ENCODE measurements at regions of chr20 and their contacts with region 1.

Region 1: GRCh38 chr20:44866703-44867335 is 18.7 kb upstream of the YWHAB start:
- DNase-seq: no peak
- ATAC-seq: no peak
- H3K4me3 ChIP-seq: no peak overlapping the region
- H3K27ac ChIP-seq: no peak overlapping the region
- H3K4me1 ChIP-seq: peaks cover 3% of the 10 kb centered on the region; the same call in 1 of the 2 replicates
- H3K27me3 ChIP-seq: 0 out of 2 replicates have a peak, but pooled peaks cover 6% of the 10 kb centered on the region
- CTCF ChIP-seq: no peak

Region 2: GRCh38 chr20:44664131-44664530 is 202.7 kb before region 1 on chr20:
- CTCF ChIA-PET with region 1: interaction called, 12 read pairs
- POLR2A ChIA-PET with region 1: no interaction called
- intact Hi-C with region 1: no loop called
- DNase-seq: no peak
- ATAC-seq: no peak
- H3K4me3 ChIP-seq: no peak overlapping the region
- H3K27ac ChIP-seq: no peak overlapping the region
- H3K4me1 ChIP-seq: no peaks in the 10 kb centered on the region
- H3K27me3 ChIP-seq: 0 out of 2 replicates have a peak, but pooled peaks cover 9% of the 10 kb centered on the region
- CTCF ChIP-seq: no peak

Region 3: DNA sequence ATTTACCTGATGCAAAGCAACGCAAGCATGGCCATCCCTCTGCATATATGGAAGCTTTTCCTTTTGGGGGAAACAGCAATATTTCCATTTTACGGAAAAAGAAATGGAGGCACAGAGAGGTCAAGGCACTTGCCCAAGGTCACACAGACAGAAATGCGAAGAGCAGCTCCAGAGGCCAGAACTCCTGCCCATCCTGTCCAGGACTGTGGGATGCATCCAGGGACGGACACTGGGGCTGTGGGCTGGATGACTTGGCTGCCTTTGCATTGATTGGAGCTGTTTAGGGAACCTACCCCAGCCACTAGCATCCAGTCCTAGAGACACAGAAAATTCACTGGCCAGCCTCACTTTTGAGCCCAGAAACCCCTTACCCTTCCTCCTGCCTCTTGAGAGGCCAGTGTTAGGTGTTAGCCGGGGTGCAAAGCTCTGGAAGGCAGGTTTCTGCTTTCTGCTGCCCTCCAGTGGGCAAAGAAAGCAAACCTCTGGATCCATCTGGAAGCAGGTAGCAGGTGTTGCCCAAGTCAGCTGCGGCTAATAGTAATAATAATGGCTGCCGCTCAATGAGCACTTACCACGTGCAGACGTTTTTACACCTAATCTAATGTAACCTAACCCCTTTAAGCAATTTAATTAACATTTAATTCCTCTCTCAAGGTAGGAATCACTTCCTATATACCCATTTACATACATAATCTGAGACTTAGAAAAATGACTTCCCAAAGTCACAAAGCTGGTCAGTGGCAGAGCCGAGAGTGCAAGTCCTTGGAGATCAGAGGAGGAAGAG is 183.4 kb before region 1 on chr20:
- CTCF ChIA-PET with region 1: interaction called, 3 read pairs
- POLR2A ChIA-PET with region 1: no interaction called
- intact Hi-C with region 1: loop called (anchors 2 kb)
- DNase-seq: peak; percentile 87
- ATAC-seq: peak; percentile 85
- H3K4me3 ChIP-seq: no peak overlapping the region
- H3K27ac ChIP-seq: no peak overlapping the region
- H3K4me1 ChIP-seq: peaks cover 10% of the 10 kb centered on the region
- H3K27me3 ChIP-seq: no peaks in the 10 kb centered on the region
- CTCF ChIP-seq: peak; percentile 89

Region 4: DNA sequence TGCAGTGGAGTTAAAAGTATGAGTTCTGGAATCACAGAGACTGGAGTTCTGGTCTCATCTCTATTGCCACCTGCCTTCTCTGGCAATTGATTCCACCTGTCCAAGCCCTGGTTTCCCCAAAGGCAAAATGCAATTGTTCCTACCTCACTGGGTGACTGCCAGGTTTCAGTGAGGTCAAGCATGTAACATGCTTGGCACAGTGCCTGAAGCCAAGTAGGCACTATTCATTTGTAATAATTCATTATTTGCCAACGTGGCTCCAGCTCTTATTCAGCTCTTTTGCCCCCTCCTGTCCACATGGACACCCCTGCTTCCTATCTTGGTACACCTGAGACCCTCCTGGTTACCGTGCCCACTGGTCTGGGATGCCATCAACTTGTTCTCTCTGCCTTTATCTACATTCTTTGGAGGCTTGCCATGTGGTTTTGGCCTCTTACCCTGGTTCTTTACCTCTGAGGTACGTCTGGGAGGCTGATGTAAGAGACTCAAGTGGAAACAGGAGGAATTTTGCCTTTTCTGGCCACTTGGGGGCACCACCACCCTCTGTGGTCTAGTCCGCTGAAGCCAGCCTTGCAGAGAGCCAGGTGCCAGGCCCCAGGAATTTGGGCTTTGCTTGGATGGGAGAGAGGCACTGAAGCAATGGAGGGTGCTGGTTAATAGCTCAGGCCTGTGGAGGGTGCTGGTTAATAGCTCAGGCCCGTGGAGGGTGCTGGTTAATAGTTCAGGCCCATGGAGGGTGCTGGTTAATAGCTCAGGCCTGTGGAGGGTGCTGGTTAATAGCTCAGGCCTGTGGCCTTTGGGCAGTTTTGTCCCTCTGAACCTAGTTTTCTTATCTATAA is 119.4 kb before region 1 on chr20:
- CTCF ChIA-PET with region 1: interaction called, 13 read pairs
- POLR2A ChIA-PET with region 1: no interaction called
- intact Hi-C with region 1: loop called (anchors 1 kb)
- DNase-seq: peak; percentile 97
- ATAC-seq: peak; percentile 62
- H3K4me3 ChIP-seq: peak overlapping the region; percentile 17; the same call in 1 of the 2 replicates
- H3K27ac ChIP-seq: peak overlapping the region; percentile 51
- H3K4me1 ChIP-seq: peaks cover 26% of the 10 kb centered on the region
- H3K27me3 ChIP-seq: peaks cover 3% of the 10 kb centered on the region; the same call in 1 of the 2 replicates
- CTCF ChIP-seq: peak; percentile 92

Region 5: GRCh38 chr20:44885392-44886265 is 18.8 kb after region 1 on chr20 and contains the start of gene YWHAB:
- CTCF ChIA-PET with region 1: no interaction called
- POLR2A ChIA-PET with region 1: no interaction called
- intact Hi-C with region 1: no loop called
- DNase-seq: peak; percentile 99
- ATAC-seq: peak; percentile 96
- H3K4me3 ChIP-seq: peak within 1 kb of the TSS; percentile 96
- H3K27ac ChIP-seq: peak within 1 kb of the TSS; percentile 77
- H3K4me1 ChIP-seq: peaks cover 33% of the 10 kb centered on the region
- H3K27me3 ChIP-seq: no peaks in the 10 kb centered on the region
- CTCF ChIP-seq: no peak
- total RNA-seq, gene YWHAB: 116 and 118 TPM in 2 replicates

Region 6: GRCh38 chr20:45311589-45312211 is 444.9 kb after region 1 on chr20:
- CTCF ChIA-PET with region 1: no interaction called
- POLR2A ChIA-PET with region 1: no interaction called
- intact Hi-C with region 1: no loop called
- DNase-seq: peak; percentile 81
- ATAC-seq: peak; percentile 90
- H3K4me3 ChIP-seq: peak overlapping the region; percentile 2; the same call in 1 of the 2 replicates
- H3K27ac ChIP-seq: no peak overlapping the region
- H3K4me1 ChIP-seq: no peaks in the 10 kb centered on the region
- H3K27me3 ChIP-seq: no peaks in the 10 kb centered on the region
- CTCF ChIP-seq: peak; percentile 94

Measured in PC-3 (cell line).